Posterior cingulate gyrus (tissue), 11 donors: ENCODE measurements at regions of chr17 and their contacts with region 1.

Region 1: DNA sequence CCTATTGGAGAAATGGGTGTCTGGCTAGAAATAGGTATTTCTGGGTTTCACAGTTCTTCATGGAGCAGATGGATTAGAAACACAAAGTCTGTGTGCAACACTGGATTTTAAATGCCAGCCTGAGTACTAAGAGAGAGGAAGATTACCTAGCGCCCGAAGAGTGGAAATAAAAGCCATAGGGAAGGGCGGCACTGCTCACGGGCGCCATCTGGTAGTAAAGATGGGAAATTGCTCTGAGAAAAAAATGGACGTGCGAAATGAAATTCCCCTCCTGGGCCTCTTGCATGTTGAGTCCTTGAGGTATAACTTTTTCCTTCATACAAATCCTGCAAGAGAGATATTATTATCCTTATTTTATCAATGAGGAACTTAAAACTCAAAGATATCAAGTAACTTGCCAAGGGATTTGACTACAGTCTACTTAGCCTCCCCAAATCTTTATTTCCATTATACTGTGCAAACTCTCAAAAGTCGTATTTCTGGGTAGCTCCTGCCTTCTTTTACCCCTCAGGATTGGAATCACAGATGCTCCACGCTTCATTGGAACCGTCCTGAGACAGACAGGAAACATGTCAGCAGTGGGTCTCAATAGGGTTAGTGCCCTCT is 72.8 kb downstream of the MMD start:
- DNase-seq: peak in 9 of 10 donors; percentile 33 to 91 (median 46)

Region 2: GRCh38 chr17:55295411-55296170 is 53.3 kb before region 1 on chr17:
- intact Hi-C with region 1: loop called (anchors 10 kb)
- DNase-seq: peak in 5 of 10 donors; percentile 42 to 81 (median 56)